Left colon (tissue), 2 donors: ENCODE measurements at regions of chr7 and their contacts with region 1.

Region 1: GRCh38 chr7:122219253-122219865 is 75.3 kb upstream of the AASS start:
- DNase-seq: no peak
- ATAC-seq: peak; percentile 38

Region 2: GRCh38 chr7:122343601-122344302 is 124.4 kb after region 1 on chr7:
- intact Hi-C with region 1: no loop called
- DNase-seq: no peak
- ATAC-seq: no peak

Region 3: GRCh38 chr7:122397381-122397780 is 178.0 kb after region 1 on chr7:
- intact Hi-C with region 1: no loop called
- DNase-seq: no peak
- ATAC-seq: no peak

Region 4: GRCh38 chr7:122532406-122533269 is 313.3 kb after region 1 on chr7:
- intact Hi-C with region 1: loop called (anchors 5 to 10 kb)
- DNase-seq: no peak
- ATAC-seq: no peak